HCT116 (cell line): ENCODE measurements at regions of chr17 and their contacts with region 1.

Region 1: DNA sequence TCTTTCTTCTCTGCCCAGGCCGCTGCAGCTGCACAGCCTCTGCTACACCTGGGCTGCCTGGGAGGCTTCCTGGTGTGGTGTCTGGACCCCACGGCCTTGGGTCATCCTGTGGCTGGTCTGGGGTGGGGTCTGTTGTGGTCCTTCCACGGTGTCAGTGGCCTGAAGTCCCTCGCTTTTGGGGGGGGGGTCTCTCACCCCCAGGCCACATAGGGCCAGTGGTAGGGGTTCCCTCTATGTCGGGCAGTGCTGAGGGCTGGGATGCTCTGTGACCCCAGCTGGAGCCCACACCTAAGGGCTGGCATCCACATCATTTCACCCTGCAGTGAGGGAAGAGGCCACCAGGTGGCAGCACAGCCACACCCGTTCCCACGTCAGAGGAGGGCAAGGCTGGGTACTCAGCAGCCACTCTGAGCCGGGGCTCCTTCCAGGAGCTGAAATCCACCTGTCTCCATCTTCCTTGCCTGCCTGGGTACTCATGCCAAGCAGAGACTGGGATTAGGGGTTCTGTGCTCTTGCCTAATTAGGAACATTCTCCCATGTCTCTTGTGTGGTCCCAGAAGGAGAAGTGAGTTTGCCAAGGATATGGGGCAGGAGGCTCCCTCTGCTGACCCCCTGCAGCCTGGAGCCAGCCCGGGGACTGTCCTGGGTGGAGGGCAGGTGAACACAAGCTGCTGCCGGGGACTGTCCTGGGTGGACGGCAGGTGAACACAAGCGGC is 13.0 kb downstream of the ENGASE start:
- DNase-seq: peak; percentile 31
- ATAC-seq: peak; percentile 88
- H3K4me3 ChIP-seq: no peak overlapping the region
- H3K27ac ChIP-seq: no peak overlapping the region
- H3K4me1 ChIP-seq: no peaks in the 10 kb centered on the region
- H3K27me3 ChIP-seq: no peaks in the 10 kb centered on the region
- CTCF ChIP-seq: peak; percentile 88 to 98 (median 96)
- POLR2A ChIP-seq: no peak
- RAD21 ChIP-seq: peak; percentile 92

Region 2: GRCh38 chr17:79074650-79075445 is 12.7 kb before region 1 on chr17 and contains the start of gene ENGASE:
- CTCF ChIA-PET with region 1: interaction called, 11 read pairs
- POLR2A ChIA-PET with region 1: interaction called, 5 read pairs
- RAD21 ChIA-PET with region 1: interaction called in 1 of 2 experiments, 3 read pairs
- intact Hi-C with region 1: no loop called
- DNase-seq: peak; percentile 92
- ATAC-seq: peak; percentile 99
- H3K4me3 ChIP-seq: peak within 1 kb of the TSS; percentile 78 to 91
- H3K27ac ChIP-seq: peak within 1 kb of the TSS; percentile 67
- H3K4me1 ChIP-seq: peaks cover 10 to 22% of the 10 kb centered on the region in 2 experiments; a peak in 3 of 4 replicates
- H3K27me3 ChIP-seq: no peaks in the 10 kb centered on the region
- CTCF ChIP-seq: no peak
- POLR2A ChIP-seq: peak; percentile 38
- RAD21 ChIP-seq: no peak
- total RNA-seq, gene ENGASE: 54.2 TPM

Region 3: DNA sequence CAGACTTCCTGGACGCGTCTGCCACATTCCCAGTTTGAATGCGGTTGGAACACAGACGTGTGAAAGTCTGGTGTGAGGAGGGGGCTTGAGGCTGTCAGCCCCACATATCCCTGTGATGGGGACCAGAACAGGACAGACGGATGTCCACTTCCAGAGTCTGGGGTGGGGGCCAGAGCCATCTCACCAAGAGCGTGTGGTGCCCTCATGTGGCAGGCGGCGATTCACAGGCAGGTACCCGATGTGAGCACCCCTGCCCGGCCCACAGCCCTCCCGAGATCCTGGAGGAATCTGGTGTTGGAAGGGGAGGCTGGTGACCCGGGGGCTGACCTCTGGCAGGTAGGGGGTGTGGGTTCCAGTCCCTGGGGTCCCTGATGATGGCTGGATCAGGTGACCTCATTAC is 38.6 kb after region 1 on chr17:
- CTCF ChIA-PET with region 1: no interaction called
- POLR2A ChIA-PET with region 1: no interaction called
- RAD21 ChIA-PET with region 1: no interaction called
- intact Hi-C with region 1: loop called (anchors 1 kb)
- DNase-seq: no peak
- ATAC-seq: peak; percentile 87
- H3K4me3 ChIP-seq: no peak overlapping the region
- H3K27ac ChIP-seq: no peak overlapping the region
- H3K4me1 ChIP-seq: no peaks in the 10 kb centered on the region
- H3K27me3 ChIP-seq: peaks cover 45% of the 10 kb centered on the region
- CTCF ChIP-seq: peak; percentile 38 to 66 (median 58); a peak in 5 of 6 replicates
- POLR2A ChIP-seq: no peak
- RAD21 ChIP-seq: peak; percentile 64

Region 4: DNA sequence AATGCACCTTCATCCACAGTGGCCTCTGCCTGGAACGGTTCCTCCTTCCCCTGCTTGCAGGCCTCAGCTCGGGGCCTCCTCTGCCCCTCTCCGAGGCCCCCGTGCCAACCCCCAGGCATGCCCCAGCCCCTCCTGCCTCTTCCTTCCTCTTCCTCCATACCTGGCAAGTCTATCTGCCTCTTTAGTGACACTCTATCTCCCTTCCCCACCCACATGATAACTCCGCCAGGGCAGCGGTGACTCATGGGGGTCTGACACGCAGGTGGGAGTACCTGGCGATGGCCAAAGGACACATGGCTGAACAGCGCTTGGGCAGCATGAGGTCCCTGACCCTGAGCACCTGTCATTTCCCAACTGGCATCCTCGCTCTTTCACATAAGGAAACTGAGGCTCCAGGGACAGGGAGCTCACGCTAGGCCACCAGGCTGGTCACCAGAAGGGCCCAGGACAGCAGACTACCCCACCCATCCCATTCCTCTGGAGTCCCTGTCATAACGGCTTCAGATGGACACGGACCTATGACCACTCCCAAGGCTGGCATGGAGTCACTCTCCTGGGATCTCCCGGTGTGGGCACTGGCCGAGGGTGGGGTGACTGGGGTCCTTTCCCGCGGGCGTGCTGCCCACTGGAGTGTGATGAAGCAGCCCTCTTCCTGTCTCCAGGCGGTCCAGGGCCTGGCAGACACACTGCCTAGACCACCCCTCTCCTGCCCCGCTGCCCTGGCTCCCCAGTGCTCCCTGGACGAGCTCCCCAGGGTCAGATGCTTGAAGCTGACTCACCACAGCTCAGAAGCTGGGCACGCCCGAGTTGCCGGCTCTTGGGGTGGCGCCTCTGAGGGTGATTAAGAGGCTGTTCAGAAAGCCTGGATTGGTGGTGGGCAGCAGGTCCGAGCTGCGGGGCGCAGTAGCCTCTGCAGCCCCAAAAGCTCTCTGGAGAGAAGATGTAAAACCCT is 87.6 kb after region 1 on chr17:
- CTCF ChIA-PET with region 1: no interaction called
- POLR2A ChIA-PET with region 1: no interaction called
- RAD21 ChIA-PET with region 1: no interaction called
- intact Hi-C with region 1: loop called (anchors 5 kb)
- DNase-seq: no peak
- ATAC-seq: peak; percentile 75
- H3K4me3 ChIP-seq: peak overlapping the region in 1 of 2 experiments; percentile 21; a peak in 1 of 4 replicates
- H3K27ac ChIP-seq: no peak overlapping the region
- H3K4me1 ChIP-seq: peaks cover 5 to 24% of the 10 kb centered on the region in 2 experiments; a peak in 3 of 4 replicates
- H3K27me3 ChIP-seq: peaks cover 30% of the 10 kb centered on the region; the same call in 1 of the 2 replicates
- CTCF ChIP-seq: no peak
- POLR2A ChIP-seq: no peak
- RAD21 ChIP-seq: no peak

Region 5: DNA sequence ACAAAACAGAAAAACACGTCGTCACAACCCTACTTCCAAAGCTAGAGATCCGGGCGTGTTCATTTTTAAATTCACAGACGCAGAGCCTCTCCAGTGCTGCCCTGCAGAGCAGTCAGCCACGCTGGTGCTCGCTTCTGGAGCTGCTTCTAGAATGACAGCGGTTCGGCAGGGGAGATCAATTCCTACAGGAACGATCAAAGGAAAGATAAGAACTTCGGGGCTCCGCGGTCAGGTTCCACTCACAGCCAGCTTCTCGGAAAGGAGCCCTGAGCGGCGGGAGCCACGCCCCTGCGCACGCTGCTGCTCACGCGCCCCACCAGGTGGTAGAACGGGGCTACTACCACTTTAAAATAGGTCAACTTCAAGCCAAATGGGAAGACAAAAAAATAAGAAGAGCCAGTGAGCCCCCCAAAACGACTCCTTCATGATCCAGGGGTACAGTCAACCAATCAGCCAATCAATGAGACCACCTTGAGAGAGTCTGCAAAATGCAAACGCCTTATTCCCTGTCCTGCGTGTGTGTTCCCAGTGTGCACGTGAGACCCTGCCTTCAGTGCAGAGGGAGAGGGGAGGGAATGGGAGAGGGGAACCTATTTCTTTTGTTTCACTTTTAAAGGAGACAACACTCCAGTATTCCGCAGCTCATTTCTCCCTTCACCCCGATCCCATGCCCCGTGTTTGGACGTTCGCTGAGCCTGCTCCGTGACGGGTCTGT is 313.6 kb after region 1 on chr17:
- CTCF ChIA-PET with region 1: interaction called, 10 read pairs
- POLR2A ChIA-PET with region 1: no interaction called
- RAD21 ChIA-PET with region 1: no interaction called
- intact Hi-C with region 1: no loop called
- DNase-seq: peak; percentile 44
- ATAC-seq: peak; percentile 93
- H3K4me3 ChIP-seq: peak overlapping the region; percentile 38 to 43
- H3K27ac ChIP-seq: no peak overlapping the region
- H3K4me1 ChIP-seq: peaks cover 4 to 10% of the 10 kb centered on the region in 2 experiments; a peak in 2 of 4 replicates
- H3K27me3 ChIP-seq: peaks cover 23% of the 10 kb centered on the region
- CTCF ChIP-seq: peak; percentile 75 to 97 (median 97)
- POLR2A ChIP-seq: no peak
- RAD21 ChIP-seq: peak; percentile 60